ENCODE measurements at regions of chr1 and their contacts with region 1.

Region 1: DNA sequence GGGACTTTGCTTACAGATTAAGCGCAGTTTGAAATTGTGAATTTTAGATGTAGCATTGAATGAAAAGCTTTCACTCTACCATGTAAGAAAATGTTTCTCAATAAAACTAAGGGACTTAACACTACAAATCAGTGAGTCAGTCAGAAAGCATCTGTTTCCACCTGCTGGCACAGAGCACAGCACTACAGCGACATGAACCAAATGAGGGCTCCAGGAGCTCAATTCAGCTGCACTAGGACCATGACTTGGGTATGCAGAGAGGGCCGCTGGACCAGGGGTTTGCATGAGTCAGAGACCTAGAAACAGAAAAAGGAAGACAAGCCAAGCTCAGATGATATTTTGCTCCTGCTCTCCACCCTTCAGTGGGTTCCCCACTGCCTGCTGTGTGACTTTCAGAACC is 5.2 kb downstream of the SUSD4 start:
- DNase-seq: no peak
- ATAC-seq: no peak
- H3K4me3 ChIP-seq: no peak overlapping the region
- H3K27ac ChIP-seq: no peak overlapping the region
- H3K4me1 ChIP-seq: no peaks in the 10 kb centered on the region
- H3K27me3 ChIP-seq: peaks cover 48% of the 10 kb centered on the region
- CTCF ChIP-seq: no peak

Region 2: DNA sequence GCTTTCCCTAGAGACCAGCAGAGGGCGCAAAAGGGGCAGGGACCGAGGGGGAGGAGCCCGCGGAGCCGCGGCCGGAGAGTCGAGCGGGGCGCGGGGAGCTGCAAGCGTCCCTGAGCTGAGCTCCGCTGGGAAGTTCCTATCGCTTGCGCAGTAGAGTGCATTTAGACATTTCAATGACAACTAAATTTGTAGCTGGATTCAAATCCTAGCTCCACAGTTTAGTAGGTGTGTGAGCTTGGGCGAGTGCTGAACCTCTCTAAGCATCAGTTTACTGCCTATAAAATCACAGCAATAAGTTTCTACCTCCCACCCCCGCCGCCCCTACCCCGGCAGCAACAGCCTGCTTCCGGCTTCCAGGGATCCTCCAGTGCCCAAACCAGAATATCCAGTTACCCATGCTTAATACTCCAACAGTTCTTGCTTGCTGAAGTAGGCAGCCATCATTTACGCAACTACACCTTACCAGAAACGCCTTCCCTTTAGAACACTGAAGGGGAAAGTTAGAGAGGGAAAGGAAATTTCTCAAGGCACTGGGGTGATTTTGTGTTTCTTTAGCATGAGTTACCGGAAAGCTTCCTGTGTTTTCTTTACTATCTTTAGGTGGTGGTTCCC is 224.9 kb before region 1 on chr1:
- CTCF ChIA-PET with region 1: interaction called, 14 read pairs
- POLR2A ChIA-PET with region 1: no interaction called
- in situ Hi-C with region 1: no loop called
- intact Hi-C with region 1: no loop called
- DNase-seq: no peak
- ATAC-seq: peak; percentile 95
- H3K4me3 ChIP-seq: peak overlapping the region; percentile 19 to 41
- H3K27ac ChIP-seq: no peak overlapping the region
- H3K4me1 ChIP-seq: peaks cover 9% of the 10 kb centered on the region
- H3K27me3 ChIP-seq: peaks cover 22% of the 10 kb centered on the region
- CTCF ChIP-seq: peak; percentile 98

Region 3: GRCh38 chr1:223319905-223320600 is 38.8 kb before region 1 on chr1:
- CTCF ChIA-PET with region 1: no interaction called
- POLR2A ChIA-PET with region 1: no interaction called
- in situ Hi-C with region 1: no loop called
- intact Hi-C with region 1: no loop called
- DNase-seq: no peak
- ATAC-seq: no peak
- H3K4me3 ChIP-seq: no peak overlapping the region
- H3K27ac ChIP-seq: no peak overlapping the region
- H3K4me1 ChIP-seq: no peaks in the 10 kb centered on the region
- H3K27me3 ChIP-seq: peaks cover 14% of the 10 kb centered on the region
- CTCF ChIP-seq: no peak

Measured in Panc1 (cell line).